ENCODE measurements at regions of chr3 and their contacts with region 1.

Region 1: GRCh38 chr3:142022381-142022780 is 127.0 kb downstream of the TFDP2 start:
- DNase-seq: peak; percentile 79
- H3K4me3 ChIP-seq: peak overlapping the region; percentile 33
- H3K27ac ChIP-seq: peak overlapping the region; percentile 65
- H3K4me1 ChIP-seq: peaks cover 67% of the 10 kb centered on the region
- CTCF ChIP-seq: peak; percentile 81

Region 2: DNA sequence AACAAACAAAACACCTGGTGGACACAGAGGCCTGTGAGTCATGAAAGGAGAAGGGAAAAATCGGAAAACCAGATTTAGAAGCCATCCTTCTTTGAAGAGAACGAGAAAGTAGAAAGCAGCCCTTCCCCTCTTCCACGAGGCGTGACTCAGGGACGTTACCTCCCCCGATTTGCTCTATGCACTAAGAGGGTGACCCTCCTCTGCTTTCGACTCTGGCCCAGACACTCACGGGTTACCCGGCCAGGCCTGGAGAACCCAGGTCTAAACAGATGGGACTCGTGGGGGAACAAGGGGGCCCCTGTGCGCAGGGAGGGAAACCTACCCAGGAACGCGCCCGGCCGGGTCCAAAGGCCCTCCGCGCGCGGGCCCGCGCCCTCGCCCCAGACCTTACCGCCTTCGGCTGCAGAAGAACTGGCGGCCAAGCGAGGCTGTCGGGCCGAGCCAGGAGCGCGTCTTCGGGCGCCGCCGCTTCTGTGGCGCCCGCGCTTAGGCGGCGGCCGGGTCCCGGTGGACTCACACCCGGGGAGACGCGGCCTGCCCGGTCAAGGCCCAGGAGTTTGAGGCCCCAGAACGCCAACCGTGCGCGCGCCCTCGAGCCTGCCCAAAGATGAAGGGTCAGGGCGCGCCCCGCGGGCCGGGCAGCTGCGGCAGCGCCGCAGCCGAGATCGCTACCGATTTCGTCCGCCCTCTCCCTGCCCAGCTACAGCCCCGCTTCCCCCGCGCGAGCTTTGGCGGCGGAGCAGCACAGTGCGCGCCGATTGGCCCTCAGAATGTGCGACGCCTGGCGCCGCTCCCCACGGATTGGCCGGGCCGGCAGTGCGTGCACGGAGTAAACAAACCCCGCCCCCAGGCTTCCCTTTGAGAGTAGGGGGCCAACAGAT is 126.7 kb after region 1 on chr3 and contains the start of gene TFDP2:
- CTCF ChIA-PET with region 1: no interaction called
- POLR2A ChIA-PET with region 1: interaction called, 5 read pairs
- intact Hi-C with region 1: loop called (anchors 2 kb)
- DNase-seq: peak; percentile 93
- H3K4me3 ChIP-seq: peak within 1 kb of the TSS; percentile 77
- H3K27ac ChIP-seq: peak within 1 kb of the TSS; percentile 71
- H3K4me1 ChIP-seq: peaks cover 30% of the 10 kb centered on the region
- CTCF ChIP-seq: 0 out of 2 replicates have a peak, but pooled peaks have one; percentile 16
- total RNA-seq, gene TFDP2: 169 and 201 TPM in 2 replicates

Region 3: GRCh38 chr3:142211035-142211434 is 188.7 kb after region 1 on chr3:
- CTCF ChIA-PET with region 1: no interaction called
- POLR2A ChIA-PET with region 1: no interaction called
- intact Hi-C with region 1: loop called (anchors 2 kb)
- DNase-seq: peak; percentile 80
- H3K4me3 ChIP-seq: no peak overlapping the region
- H3K27ac ChIP-seq: no peak overlapping the region
- H3K4me1 ChIP-seq: peaks cover 11% of the 10 kb centered on the region
- CTCF ChIP-seq: peak; percentile 87

Region 4: DNA sequence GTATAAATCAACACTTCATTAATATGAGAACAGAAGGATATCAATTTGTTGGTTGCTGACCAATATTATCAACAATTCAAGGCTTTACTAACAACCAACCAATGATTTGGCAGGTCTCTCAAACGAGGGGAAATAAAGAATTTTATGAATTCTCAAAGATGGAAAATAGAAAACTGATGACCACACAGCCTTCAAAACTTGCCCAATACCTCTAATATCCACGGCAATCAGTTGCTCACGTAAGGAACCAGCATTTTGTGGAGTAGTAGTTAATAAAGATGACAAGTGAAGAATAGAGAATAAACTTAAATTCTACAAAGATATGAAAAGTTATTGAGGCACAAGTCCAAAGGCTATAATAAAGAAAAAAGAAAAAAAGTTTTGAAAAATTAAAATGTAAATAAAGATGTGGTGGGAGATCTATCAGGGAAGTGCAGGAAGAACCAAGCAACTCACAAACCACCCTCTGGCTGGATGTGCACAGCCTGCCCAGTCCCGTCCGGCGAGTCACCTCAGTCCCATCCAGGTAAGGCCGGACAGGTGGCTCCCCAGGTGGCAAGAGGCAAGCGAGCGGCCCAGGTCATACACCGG is 202.2 kb after region 1 on chr3:
- CTCF ChIA-PET with region 1: no interaction called
- POLR2A ChIA-PET with region 1: interaction called, 4 read pairs
- intact Hi-C with region 1: loop called (anchors 5 kb)
- DNase-seq: no peak
- H3K4me3 ChIP-seq: peak overlapping the region; percentile 87
- H3K27ac ChIP-seq: no peak overlapping the region
- H3K4me1 ChIP-seq: peaks cover 16% of the 10 kb centered on the region
- CTCF ChIP-seq: no peak

Measured in OCI-LY7 (cell line).